ENCODE measurements at regions of chr16 and their contacts with region 1.

Region 1: DNA sequence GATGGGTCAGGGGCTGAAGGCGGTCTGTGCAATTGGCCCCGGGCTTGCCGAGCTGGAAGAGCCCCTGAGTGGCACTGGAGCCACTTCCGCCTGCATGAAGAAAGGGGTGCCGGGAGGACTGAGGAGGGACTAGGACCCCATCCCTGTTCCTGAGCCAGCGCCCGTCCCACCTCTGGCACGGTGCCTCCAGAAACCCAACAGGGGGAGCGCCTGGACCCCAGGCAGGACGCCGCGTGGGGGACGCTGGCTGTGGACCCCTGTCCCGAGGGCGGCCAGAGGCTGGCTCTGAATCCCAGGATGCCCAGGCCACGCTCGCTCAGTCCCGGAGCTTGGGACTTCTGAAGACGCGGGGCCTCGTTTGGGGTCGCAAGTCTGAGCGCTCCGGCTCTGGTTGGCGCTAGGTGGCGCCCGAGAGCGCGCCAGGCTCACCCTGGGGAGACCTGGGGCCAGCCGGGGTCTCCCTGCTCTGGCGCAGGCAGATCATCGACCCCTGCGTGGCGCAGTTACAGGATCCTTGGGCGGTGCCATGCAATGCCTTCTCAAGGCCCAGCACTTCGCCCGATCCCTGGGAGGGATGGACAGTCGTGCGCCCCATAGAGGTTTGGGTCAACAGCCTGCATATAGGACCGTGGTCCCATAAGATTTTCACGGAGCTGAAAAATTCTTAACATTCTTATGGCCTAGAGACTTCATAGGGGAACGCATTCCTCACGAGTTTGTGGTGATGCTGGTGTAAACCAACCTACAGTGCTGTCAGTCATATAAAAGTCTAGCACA is 58.5 kb upstream of the CREBBP start:
- DNase-seq: peak; percentile 56 to 86
- ATAC-seq: peak; percentile 93 to 95
- H3K4me3 ChIP-seq: peak overlapping the region; percentile 46
- H3K27ac ChIP-seq: peak overlapping the region; percentile 54 to 83; a peak in 5 of 6 replicates
- H3K4me1 ChIP-seq: peaks cover 10% of the 10 kb centered on the region
- CTCF ChIP-seq: peak; percentile 93
- EP300 ChIP-seq: no peak
- POLR2A ChIP-seq: no peak; the same call in 1 of the 2 replicates
- RAD21 ChIP-seq: peak; percentile 62 to 72

Region 2: GRCh38 chr16:3909791-3910570 is 29.1 kb before region 1 on chr16:
- CTCF ChIA-PET with region 1: interaction called, 12 read pairs
- POLR2A ChIA-PET with region 1: no interaction called
- DNase-seq: no peak
- ATAC-seq: no peak
- H3K4me3 ChIP-seq: no peak overlapping the region
- H3K27ac ChIP-seq: no peak overlapping the region
- H3K4me1 ChIP-seq: no peaks in the 10 kb centered on the region
- CTCF ChIP-seq: no peak
- EP300 ChIP-seq: no peak
- POLR2A ChIP-seq: no peak
- RAD21 ChIP-seq: no peak

Region 3: DNA sequence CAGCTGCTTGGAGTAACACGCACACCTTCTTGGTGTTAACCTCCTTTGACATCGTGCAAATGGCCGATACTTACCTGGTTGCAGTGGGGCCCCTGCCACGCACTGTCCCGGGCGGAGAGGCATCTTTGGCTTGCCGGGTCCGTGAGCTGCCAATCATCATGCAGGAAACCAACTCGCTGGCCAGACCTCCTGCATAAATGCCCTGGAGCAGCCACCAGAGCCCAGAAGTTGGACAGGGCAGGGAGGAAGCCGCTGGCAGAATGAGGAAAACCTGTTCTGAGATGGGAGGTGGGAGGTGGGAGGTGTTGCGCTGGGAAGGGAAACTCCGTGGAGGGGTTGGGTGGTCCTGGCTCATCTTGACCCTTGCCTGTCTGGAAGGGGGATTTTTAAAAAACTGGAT is 16.8 kb before region 1 on chr16:
- CTCF ChIA-PET with region 1: interaction called, 24 read pairs
- POLR2A ChIA-PET with region 1: no interaction called
- DNase-seq: no peak
- ATAC-seq: peak in 1 of 2 experiments; percentile 24; a peak in 1 of 6 replicates
- H3K4me3 ChIP-seq: no peak overlapping the region
- H3K27ac ChIP-seq: no peak overlapping the region
- H3K4me1 ChIP-seq: no peaks in the 10 kb centered on the region
- CTCF ChIP-seq: no peak
- EP300 ChIP-seq: no peak
- POLR2A ChIP-seq: no peak
- RAD21 ChIP-seq: no peak

Region 4: GRCh38 chr16:3950343-3951193 is 11.5 kb after region 1 on chr16:
- CTCF ChIA-PET with region 1: interaction called, 31 read pairs
- POLR2A ChIA-PET with region 1: no interaction called
- DNase-seq: peak in 1 of 2 experiments; percentile 52
- ATAC-seq: peak; percentile 45 to 63; a peak in 3 of 6 replicates
- H3K4me3 ChIP-seq: no peak overlapping the region
- H3K27ac ChIP-seq: peak overlapping the region in 1 of 2 experiments; percentile 24; a peak in 3 of 6 replicates
- H3K4me1 ChIP-seq: peaks cover 11% of the 10 kb centered on the region
- CTCF ChIP-seq: no peak
- EP300 ChIP-seq: no peak
- POLR2A ChIP-seq: no peak
- RAD21 ChIP-seq: no peak

Region 5: DNA sequence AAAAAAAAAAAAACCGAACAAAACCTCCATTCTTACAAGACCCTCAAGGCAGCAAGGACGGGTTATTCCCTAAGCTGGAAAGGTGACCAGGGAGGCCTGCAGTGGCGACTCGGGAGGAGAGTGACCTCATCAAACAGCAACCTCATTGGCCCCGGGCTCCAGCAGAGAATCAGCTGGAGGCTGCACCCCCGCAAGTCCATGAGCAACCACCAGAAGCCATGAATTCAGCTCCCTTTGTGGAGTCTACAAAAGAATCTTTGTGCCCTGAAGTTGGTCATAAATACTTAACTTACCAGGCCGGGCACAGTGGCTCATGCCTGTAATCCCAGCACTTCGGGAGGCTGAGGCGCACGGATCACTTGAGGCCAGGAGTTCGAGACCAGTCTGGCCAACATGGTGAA is 22.4 kb after region 1 on chr16:
- CTCF ChIA-PET with region 1: interaction called, 47 read pairs
- POLR2A ChIA-PET with region 1: no interaction called
- DNase-seq: peak; percentile 36 to 41
- ATAC-seq: peak; percentile 60 to 72; a peak in 4 of 6 replicates
- H3K4me3 ChIP-seq: peak overlapping the region; percentile 38
- H3K27ac ChIP-seq: peak overlapping the region; percentile 65 to 82
- H3K4me1 ChIP-seq: peaks cover 5% of the 10 kb centered on the region
- CTCF ChIP-seq: no peak
- EP300 ChIP-seq: no peak
- POLR2A ChIP-seq: no peak
- RAD21 ChIP-seq: no peak

Region 6: GRCh38 chr16:3971261-3971660 is 32.2 kb after region 1 on chr16:
- CTCF ChIA-PET with region 1: interaction called, 47 read pairs
- POLR2A ChIA-PET with region 1: no interaction called
- DNase-seq: peak in 1 of 2 experiments; percentile 32
- ATAC-seq: no peak; a peak in 1 of 6 replicates
- H3K4me3 ChIP-seq: no peak overlapping the region
- H3K27ac ChIP-seq: no peak overlapping the region
- H3K4me1 ChIP-seq: peaks cover 4% of the 10 kb centered on the region; the same call in 2 of the 3 replicates
- CTCF ChIP-seq: no peak
- EP300 ChIP-seq: no peak
- POLR2A ChIP-seq: no peak
- RAD21 ChIP-seq: no peak

Measured in A549 (cell line).